Endothelial cell of umbilical vein (primary cell): ENCODE measurements at regions of chr2 and their contacts with region 1.

Region 1: GRCh38 chr2:232142049-232142448 is 180.5 kb downstream of the DIS3L2 start:
- DNase-seq: peak; percentile 41
- H3K4me3 ChIP-seq: no peak overlapping the region
- H3K27ac ChIP-seq: no peak overlapping the region
- H3K4me1 ChIP-seq: peaks cover 12% of the 10 kb centered on the region
- H3K27me3 ChIP-seq: no peaks in the 10 kb centered on the region
- CTCF ChIP-seq: peak; percentile 64 to 70
- POLR2A ChIP-seq: no peak

Region 2: DNA sequence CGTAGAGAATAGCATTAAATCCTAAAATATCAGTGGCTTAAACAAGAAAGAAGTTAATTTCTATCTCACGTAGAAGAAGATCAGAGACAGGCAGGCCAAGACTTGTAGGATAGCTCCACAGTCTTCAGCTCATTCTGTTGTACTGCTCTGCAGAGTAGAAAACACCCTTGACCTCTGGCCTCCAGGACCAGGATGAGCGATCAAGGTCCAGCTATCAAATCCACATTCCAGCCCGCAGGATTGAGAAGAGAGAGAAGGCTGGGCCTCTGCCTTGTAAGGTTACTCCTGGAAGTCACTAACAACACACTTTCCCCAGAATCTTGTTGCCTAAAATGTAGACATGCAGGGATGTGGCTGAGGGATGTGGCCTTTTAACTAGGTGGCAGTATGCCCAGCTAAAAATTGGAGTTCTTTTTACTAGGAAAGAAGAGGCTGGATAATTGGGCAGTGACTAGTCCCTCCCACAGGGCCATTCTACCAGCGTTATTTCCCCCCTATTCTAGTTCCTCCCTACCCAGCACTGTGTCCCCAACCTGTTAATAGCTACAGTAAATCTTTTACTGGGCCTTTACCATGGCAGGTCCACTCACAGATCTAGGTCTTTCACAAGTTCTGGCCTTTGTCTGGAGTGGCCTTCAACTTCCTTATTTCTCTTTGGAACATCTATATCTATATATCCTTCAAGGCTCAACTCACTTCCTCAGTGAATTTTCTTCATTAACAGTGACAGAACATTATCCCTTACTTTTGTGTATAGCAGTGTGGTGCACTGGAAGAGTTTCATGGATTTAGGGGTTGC is 15.5 kb before region 1 on chr2:
- CTCF ChIA-PET with region 1: interaction called, 15 read pairs
- POLR2A ChIA-PET with region 1: no interaction called
- dilution Hi-C with region 1: no loop called
- intact Hi-C with region 1: no loop called
- DNase-seq: no peak
- H3K4me3 ChIP-seq: no peak overlapping the region
- H3K27ac ChIP-seq: no peak overlapping the region
- H3K4me1 ChIP-seq: no peaks in the 10 kb centered on the region
- H3K27me3 ChIP-seq: no peaks in the 10 kb centered on the region
- CTCF ChIP-seq: no peak
- POLR2A ChIP-seq: no peak

Region 3: DNA sequence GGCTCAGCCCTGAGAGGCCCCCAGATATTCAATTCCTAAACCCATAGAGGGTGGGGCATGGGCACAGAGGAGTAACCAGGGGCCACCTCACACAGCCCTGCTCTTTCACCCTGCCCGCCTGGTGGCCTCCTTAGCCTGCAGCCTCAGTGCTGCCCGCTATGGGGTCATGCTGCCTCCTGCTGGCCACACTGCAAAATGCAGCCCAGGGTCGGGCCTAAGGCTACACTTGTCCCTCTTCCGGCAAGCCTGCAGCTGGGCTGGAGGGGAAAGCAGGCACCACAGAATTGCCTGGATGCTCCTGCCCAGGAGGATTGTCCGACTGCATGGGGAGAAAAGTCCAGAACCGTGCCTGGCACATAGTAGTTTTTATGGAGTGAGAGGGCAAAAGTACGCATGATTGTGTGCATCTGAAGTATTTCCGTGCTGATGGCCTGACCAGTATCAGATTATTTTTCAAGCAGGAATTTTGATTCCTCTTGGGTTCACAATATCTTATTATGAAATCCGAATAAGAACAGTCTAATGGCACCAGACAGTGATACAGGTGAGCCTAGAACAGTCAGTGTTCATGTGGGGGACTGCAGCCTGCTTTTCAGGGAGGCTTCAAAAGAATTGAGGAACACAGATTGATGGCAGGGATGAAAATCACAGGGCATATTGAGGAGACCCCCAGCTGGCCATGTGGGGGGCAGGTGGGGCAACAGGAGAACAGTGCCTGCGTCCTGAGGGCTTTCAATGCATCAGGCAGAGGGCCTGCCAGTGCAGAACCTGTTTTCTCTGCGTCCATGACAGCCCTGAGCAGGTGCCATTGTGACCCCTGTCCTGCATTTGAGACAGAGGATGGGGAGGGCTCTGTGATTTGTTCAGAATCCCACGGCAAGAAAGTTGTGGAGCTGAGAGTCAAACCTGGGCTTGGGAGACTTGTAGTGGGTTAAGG is 185.3 kb after region 1 on chr2:
- CTCF ChIA-PET with region 1: interaction called, 11 read pairs
- POLR2A ChIA-PET with region 1: no interaction called
- dilution Hi-C with region 1: no loop called
- intact Hi-C with region 1: loop called (anchors 1 kb)
- DNase-seq: peak; percentile 73
- H3K4me3 ChIP-seq: no peak overlapping the region
- H3K27ac ChIP-seq: no peak overlapping the region
- H3K4me1 ChIP-seq: no peaks in the 10 kb centered on the region
- H3K27me3 ChIP-seq: no peaks in the 10 kb centered on the region
- CTCF ChIP-seq: peak; percentile 74 to 86
- POLR2A ChIP-seq: no peak